Dorsolateral prefrontal cortex (tissue), 120 donors: ENCODE measurements at regions of chr5 and their contacts with region 1.

Region 1: DNA sequence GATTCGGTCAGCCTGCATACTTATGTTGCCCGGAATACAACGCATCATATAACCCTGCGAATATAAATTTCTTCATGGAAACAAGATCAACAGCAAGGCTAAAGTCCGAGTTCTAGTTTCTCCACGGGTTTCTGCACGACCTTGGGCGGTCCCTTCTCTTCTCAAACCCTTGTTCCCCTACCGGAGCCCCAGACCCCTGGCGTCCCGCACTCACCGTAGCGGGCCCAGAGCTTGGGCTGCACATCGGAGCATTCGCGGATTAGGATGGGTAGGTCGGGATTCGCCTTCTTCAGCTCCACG is 438 bp downstream of the NDUFA2 start:
- DNase-seq: no peak
- H3K4me3 ChIP-seq: peak overlapping the region; percentile 76 to 100 (median 93)
- H3K27ac ChIP-seq: peak overlapping the region in 56 of 59 donors; percentile 0 to 91 (median 77)
- H3K27me3 ChIP-seq: no peaks in the 10 kb centered on the region
- CTCF ChIP-seq: no peak

Region 2: DNA sequence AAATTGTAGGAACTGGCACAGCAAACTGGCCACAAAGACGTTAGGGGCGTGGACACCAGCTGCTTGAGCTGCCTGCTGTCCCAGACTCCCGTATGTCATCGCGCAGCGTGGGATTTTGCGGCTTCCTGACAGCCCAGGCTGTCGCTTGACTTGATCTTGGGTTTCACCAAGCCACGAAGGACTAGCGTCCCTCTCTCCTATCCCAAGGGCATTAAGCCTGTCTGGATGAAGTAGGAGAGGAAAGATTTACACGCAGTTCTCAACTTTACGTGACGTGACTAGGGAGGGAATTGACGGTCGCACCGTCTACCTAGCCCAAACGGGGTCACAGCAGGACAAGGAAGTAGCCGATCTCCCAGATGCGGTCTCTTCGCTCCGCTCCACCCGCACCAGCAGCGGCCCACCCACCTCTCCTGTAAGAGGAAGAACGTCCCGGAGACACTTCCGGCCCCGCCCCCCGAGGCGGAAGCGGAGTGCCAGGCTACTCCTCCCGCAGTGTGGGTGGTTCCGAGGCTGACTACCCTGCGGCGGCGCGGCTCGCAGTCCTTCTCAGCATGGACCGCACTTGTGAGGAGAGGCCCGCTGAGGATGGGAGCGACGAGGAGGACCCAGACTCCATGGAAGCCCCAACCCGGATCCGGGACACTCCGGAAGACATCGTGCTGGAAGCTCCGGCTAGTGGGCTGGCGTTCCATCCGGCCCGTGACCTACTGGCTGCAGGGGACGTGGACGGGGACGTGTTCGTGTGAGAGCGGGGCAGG is 17.5 kb after region 1 on chr5 and contains the start of gene WDR55:
- intact Hi-C with region 1: loop called in 1 of 2 experiments (anchors 1 kb)
- DNase-seq: peak; percentile 95 to 97 (median 96)
- H3K4me3 ChIP-seq: peak within 1 kb of the TSS; percentile 69 to 98 (median 91)
- H3K27ac ChIP-seq: peak within 1 kb of the TSS; percentile 40 to 97 (median 87)
- H3K27me3 ChIP-seq: no peaks in the 10 kb centered on the region
- CTCF ChIP-seq: peak in 24 of 56 donors; percentile 6 to 47 (median 23)
- total RNA-seq, gene WDR55: 13.3 to 31.0 (median 17.6) TPM

Region 3: GRCh38 chr5:140690941-140691924 is 44.2 kb after region 1 on chr5 and contains the starts of genes HARS1 and HARS2:
- intact Hi-C with region 1: loop called (anchors 5 to 10 kb)
- DNase-seq: peak; percentile 84 to 96 (median 94)
- H3K4me3 ChIP-seq: peak within 1 kb of the TSS; percentile 69 to 100 (median 91)
- H3K27ac ChIP-seq: peak within 1 kb of the TSS in 58 of 59 donors; percentile 29 to 93 (median 82)
- H3K27me3 ChIP-seq: no peaks in the 10 kb centered on the region
- CTCF ChIP-seq: peak in 36 of 56 donors; percentile 4 to 53 (median 30)
- total RNA-seq, gene HARS1: 57.9 to 134 (median 105) TPM
- total RNA-seq, gene HARS2: 22.6 to 42.7 (median 32.0) TPM